ENCODE measurements at regions of chr3 and their contacts with region 1.

Region 1: DNA sequence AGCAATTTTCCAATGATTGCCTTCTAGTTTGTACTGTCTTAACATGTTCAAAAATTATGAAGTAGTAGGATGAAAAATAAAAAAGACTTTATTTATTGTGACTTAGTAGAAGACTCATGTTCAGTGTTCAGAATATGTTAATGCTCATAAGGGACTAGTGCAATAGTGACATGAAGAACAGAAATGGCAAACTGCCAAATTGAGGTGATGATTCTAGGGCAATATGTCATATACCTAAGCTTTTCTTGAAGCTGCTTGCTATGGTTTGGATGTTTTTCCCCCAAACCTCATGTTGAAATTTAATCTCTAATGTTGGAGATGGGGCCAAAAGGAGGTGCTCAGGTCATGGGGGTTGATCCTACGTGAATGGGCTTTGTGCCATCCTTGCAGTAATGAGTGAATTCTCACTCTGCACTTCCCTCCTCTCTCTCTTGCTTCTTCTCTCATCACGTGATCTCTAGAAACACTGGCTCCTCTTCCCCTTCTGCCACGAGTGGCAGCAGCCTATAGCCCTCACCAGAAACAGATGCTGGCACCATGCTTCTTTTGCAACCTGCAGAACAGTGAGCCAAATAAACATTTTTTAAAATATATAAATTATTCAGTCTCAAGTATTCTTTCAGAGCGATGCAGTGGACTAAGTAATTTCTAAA is 13.2 kb upstream of the PLSCR1 start:
- DNase-seq: no peak
- H3K4me3 ChIP-seq: no peak overlapping the region
- H3K27ac ChIP-seq: no peak overlapping the region
- H3K4me1 ChIP-seq: no peaks in the 10 kb centered on the region
- CTCF ChIP-seq: no peak

Region 2: DNA sequence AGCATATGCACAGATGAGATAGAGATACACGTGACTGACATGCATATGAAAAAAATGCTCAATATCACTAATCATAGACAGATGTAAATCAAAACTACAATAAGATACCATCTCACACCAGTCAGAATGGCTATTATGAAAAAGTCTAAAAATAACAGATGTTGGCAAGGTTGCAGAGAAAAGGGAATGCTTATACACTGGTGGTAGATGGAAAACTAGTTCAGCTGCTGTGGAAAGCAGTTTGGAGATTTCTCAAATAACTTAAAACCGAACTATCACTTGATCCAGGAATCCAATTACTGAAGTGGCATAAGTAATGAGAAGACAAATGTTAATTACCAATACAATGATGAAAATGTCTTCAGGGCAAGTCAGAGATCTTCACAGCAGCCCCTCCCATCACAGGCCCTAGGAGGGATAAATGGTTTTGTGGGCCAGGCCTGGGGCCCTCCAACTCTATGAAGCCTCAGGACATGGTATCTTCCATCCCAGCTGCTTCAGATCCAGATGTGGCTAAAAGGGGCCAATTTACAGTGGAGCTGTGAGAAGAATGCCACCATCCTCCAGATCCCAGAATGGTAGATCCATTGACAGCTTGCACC is 235.3 kb before region 1 on chr3:
- CTCF ChIA-PET with region 1: no interaction called
- POLR2A ChIA-PET with region 1: interaction called, 11 read pairs
- intact Hi-C with region 1: no loop called
- DNase-seq: no peak
- H3K4me3 ChIP-seq: no peak overlapping the region
- H3K27ac ChIP-seq: no peak overlapping the region
- H3K4me1 ChIP-seq: no peaks in the 10 kb centered on the region
- CTCF ChIP-seq: no peak

Region 3: DNA sequence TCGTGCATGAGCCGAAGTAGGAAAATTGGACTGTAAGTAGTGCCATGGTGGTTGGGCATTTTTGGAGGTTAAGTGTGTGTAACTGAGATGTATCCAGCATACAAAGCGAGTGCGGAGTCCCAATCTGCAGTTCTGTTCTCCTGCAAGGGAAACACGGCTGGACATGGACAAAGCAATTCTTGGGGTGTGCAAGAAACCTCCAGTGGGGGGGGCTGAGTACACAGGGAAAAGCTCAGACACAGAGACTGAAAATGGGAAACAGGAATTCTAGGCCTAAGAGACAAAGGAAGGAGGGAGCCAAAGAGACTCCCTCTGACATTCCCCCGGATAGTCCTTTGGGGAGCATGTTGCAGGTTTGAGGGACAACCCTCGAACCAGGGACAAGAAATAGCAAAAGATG is 223.5 kb before region 1 on chr3:
- CTCF ChIA-PET with region 1: no interaction called
- POLR2A ChIA-PET with region 1: no interaction called
- intact Hi-C with region 1: no loop called
- DNase-seq: no peak
- H3K4me3 ChIP-seq: no peak overlapping the region
- H3K27ac ChIP-seq: no peak overlapping the region
- H3K4me1 ChIP-seq: no peaks in the 10 kb centered on the region
- CTCF ChIP-seq: no peak

Measured in OCI-LY7 (cell line).